ENCODE measurements at regions of chr20 and their contacts with region 1.

Region 1: GRCh38 chr20:17958373-17959256 is 10.0 kb downstream of the SNX5 start:
- DNase-seq: no peak
- ATAC-seq: no peak
- H3K4me3 Mint-ChIP-seq: no peak overlapping the region
- H3K27ac Mint-ChIP-seq: peak overlapping the region; percentile 72
- H3K4me1 Mint-ChIP-seq: peaks cover 86% of the 10 kb centered on the region
- H3K27me3 Mint-ChIP-seq: no peaks in the 10 kb centered on the region

Region 2: GRCh38 chr20:17995967-17996819 is 37.6 kb after region 1 on chr20:
- CTCF ChIA-PET with region 1: interaction called, 100 read pairs
- POLR2A ChIA-PET with region 1: no interaction called
- DNase-seq: peak; percentile 63
- ATAC-seq: peak; percentile 49
- H3K4me3 Mint-ChIP-seq: no peak overlapping the region
- H3K27ac Mint-ChIP-seq: peak overlapping the region; percentile 57
- H3K4me1 Mint-ChIP-seq: peaks cover 40% of the 10 kb centered on the region
- H3K27me3 Mint-ChIP-seq: peaks cover 2% of the 10 kb centered on the region

Region 3: DNA sequence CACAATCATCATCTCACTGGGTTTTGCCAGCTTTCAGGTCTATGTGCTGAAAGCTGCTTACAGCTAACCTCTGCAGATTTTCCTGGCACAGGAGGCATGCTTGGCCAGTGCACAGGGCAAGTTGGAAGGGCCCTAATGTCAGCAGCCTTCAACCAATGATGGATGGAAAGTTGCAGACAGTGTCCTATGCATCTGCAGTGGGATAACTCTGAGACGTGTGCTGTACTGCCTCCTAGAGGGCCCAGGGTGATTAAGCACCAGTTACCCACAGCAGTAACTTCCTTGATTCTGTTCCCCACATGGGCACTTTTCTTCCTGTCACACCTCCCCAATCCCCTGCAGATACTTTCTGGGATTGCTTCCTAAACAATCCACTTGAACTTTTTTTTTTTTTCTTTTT is 60.5 kb after region 1 on chr20:
- CTCF ChIA-PET with region 1: no interaction called
- POLR2A ChIA-PET with region 1: no interaction called
- DNase-seq: peak; percentile 28
- ATAC-seq: peak; percentile 58
- H3K4me3 Mint-ChIP-seq: no peak overlapping the region
- H3K27ac Mint-ChIP-seq: no peak overlapping the region
- H3K4me1 Mint-ChIP-seq: no peaks in the 10 kb centered on the region
- H3K27me3 Mint-ChIP-seq: peaks cover 4% of the 10 kb centered on the region

Region 4: DNA sequence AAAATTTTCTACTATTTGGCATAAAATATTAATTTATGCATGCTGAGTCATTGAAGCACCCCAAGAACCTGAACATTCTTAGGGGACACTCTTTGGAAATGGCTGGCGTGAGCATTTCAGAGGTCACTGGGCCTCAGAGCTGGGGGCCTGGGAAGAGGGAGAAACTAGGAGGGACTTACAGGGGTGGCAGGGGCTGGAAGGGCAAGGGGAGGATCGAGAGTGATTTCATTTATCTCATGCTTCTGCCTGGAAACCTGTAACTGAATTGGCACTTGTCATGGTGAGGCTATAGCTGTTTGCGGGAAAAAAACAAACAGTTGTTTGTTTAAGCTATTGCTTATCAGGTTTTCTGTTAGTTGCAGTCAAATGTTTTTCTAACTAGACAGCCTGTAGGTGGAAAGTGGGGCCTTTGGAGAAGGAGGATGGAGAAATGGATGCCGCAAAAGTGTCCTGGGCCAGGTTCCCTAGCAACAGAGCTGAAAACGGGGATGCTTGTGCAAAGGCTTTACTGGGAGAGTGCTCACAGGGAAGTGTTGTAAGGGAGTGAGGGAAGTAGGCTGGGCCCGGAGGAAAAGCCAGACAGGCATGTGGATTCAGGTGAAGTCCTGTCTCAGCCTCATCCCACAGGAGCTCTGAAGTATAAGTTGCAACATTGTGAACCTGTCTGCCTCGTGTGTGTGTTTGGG is 142.7 kb after region 1 on chr20:
- CTCF ChIA-PET with region 1: no interaction called
- POLR2A ChIA-PET with region 1: no interaction called
- DNase-seq: no peak
- ATAC-seq: no peak
- H3K4me3 Mint-ChIP-seq: no peak overlapping the region
- H3K27ac Mint-ChIP-seq: no peak overlapping the region
- H3K4me1 Mint-ChIP-seq: no peaks in the 10 kb centered on the region
- H3K27me3 Mint-ChIP-seq: peaks cover 9% of the 10 kb centered on the region